Right cardiac atrium (tissue), 5 donors: ENCODE measurements at regions of chr1 and their contacts with region 1.

Region 1: GRCh38 chr1:17540255-17541001 is 930 bp downstream of the ARHGEF10L start:
- DNase-seq: peak; percentile 77 to 93 (median 91)
- ATAC-seq: peak; percentile 81 to 82
- H3K4me3 ChIP-seq: peak overlapping the region; percentile 80
- H3K27ac ChIP-seq: peak overlapping the region; percentile 15
- H3K4me1 ChIP-seq: peaks cover 11% of the 10 kb centered on the region
- H3K27me3 ChIP-seq: no peaks in the 10 kb centered on the region

Region 2: DNA sequence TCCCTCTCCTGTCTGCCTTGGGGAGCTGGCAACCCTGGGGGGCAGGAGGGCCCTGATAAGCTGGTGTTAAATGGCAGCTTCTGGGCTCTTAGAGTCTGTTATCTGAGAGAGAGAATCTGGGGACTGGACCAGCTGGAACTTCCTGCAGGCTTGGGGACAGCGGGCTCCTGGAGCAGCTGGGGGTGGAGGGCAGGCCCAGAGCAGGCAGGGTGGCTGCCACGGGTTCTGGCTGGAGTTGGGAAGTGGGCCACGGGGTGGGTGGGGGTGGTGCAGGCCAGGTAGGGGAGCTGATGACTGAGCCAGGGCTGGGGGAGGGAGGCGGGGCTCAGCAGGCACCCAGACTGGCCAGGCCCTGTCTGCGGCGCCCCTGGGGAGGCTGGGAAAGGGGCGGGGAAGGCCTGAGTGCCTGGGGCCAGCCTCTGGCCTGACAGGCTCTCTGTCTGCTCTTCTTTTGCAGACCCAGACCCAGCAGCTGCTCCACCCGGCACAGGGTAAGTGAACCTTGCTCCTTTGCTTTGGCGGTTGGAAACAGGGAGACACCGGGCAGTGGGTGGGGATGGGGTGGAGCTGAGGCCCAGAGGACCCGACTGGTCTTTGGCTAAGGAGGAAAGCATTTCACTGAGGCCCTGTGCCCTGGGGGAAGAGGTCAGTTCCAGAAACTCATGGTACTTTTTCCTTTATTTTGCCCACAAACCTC is 47.7 kb after region 1 on chr1:
- intact Hi-C with region 1: loop called in 2 of 4 experiments (anchors 5 to 10 kb)
- DNase-seq: peak; percentile 50 to 88 (median 86)
- ATAC-seq: peak; percentile 76 to 79
- H3K4me3 ChIP-seq: peak overlapping the region; percentile 42
- H3K27ac ChIP-seq: peak overlapping the region; percentile 96
- H3K4me1 ChIP-seq: peaks cover 18% of the 10 kb centered on the region
- H3K27me3 ChIP-seq: no peaks in the 10 kb centered on the region

Region 3: DNA sequence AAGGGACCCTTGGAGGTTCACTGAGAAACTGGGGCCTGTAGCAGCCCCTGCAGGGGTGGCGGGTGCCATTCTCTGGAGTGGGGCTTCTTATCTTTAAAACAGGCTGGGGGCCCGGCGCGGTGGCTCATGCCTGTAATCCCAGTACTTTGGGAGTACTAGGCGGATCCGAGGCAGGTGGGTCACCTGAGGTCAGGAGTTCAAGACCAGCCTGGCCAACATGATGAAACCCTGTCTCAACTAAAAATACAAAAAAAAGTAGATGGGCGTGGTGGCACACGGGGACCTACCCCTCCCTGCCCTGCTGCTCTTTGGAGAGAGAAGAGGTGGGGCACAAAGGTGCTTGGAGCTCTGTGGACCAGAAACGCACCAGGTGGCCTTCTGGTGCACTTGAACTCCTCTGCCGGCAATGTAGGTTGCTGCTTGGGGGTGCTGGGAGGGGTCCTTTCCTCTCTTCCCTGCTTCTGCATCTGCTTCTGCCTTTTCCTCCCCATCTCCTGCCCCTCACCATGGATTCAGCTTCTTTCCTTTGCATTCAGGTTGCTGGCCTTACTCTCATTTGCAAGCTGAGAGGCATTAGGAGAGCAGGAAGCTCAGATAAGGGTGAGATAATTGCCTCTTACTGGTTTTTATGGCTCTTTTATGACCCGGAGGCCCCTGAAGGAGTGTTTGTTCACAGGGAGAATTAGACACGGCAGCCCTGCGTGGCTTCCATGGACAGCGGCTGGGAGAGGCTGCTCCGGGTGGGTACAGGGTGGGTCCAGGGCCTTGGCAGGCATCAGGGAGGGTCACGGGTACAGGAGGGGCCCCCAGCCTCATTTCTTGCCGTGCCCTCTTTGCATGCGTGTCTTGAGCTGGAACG is 56.5 kb after region 1 on chr1:
- intact Hi-C with region 1: loop called in 1 of 4 experiments (anchors 10 kb)
- DNase-seq: peak in 2 of 3 donors; percentile 29 to 53
- ATAC-seq: no peak
- H3K4me3 ChIP-seq: no peak overlapping the region
- H3K27ac ChIP-seq: no peak overlapping the region
- H3K4me1 ChIP-seq: peaks cover 11% of the 10 kb centered on the region
- H3K27me3 ChIP-seq: no peaks in the 10 kb centered on the region